PC-9 (cell line): ENCODE measurements at regions of chr2 and their contacts with region 1.

Region 1: DNA sequence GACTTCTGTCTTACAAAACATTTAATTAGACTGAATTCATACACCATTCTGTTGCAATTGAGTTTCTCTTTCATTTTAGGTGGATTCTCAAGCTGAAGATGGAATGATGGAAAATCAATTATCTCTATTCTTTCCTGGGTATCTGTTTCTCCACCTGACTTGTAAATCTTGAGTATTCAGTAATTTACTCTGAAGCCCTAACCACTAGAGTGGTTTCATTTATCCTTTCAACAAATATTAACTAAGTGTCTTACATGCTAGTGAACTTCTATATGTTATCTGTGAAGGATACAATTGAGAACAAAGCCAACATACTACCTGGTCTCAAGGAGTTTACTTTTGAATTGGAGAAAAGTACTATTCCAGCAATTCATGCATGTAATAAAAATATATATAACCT is 94.1 kb upstream of the ZNF804A start:
- DNase-seq: no peak
- H3K4me3 ChIP-seq: no peak overlapping the region
- H3K27ac ChIP-seq: no peak overlapping the region
- H3K4me1 ChIP-seq: no peaks in the 10 kb centered on the region
- H3K27me3 ChIP-seq: no peaks in the 10 kb centered on the region
- CTCF ChIP-seq: no peak

Region 2: GRCh38 chr2:184192664-184193063 is 311.6 kb before region 1 on chr2:
- CTCF ChIA-PET with region 1: no interaction called
- POLR2A ChIA-PET with region 1: no interaction called
- intact Hi-C with region 1: loop called (anchors 10 kb)
- DNase-seq: peak in 1 of 2 experiments; percentile 28
- H3K4me3 ChIP-seq: no peak overlapping the region
- H3K27ac ChIP-seq: no peak overlapping the region
- H3K4me1 ChIP-seq: no peaks in the 10 kb centered on the region
- H3K27me3 ChIP-seq: no peaks in the 10 kb centered on the region
- CTCF ChIP-seq: no peak